RWPE1 (cell line): ENCODE measurements at regions of chr1 and their contacts with region 1.

Region 1: DNA sequence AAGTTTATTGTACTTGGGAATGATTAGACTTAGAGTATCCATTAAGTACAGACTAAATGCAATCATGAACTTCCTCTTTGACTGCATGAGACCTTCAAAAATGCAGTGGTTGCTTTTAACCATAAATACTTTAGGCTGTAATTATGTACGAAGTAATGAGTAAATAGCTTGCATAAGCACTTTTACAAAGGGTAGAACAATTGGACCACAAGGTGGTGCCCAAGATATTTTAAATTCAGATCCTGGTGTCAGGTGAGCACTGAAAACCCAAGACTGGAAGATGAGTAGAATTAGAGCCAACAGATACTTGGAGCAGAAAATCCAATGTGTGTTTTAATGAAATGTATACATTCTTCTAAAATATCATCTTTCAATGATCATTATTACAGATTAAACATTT is 43.4 kb upstream of the RHOU start:
- DNase-seq: peak; percentile 66
- H3K27ac ChIP-seq: no peak overlapping the region
- CTCF ChIP-seq: peak; percentile 35

Region 2: GRCh38 chr1:228646717-228647522 is 45.0 kb before region 1 on chr1:
- CTCF ChIA-PET with region 1: no interaction called
- POLR2A ChIA-PET with region 1: no interaction called
- DNase-seq: peak; percentile 26
- H3K27ac ChIP-seq: peak overlapping the region; percentile 94
- CTCF ChIP-seq: no peak

Region 3: DNA sequence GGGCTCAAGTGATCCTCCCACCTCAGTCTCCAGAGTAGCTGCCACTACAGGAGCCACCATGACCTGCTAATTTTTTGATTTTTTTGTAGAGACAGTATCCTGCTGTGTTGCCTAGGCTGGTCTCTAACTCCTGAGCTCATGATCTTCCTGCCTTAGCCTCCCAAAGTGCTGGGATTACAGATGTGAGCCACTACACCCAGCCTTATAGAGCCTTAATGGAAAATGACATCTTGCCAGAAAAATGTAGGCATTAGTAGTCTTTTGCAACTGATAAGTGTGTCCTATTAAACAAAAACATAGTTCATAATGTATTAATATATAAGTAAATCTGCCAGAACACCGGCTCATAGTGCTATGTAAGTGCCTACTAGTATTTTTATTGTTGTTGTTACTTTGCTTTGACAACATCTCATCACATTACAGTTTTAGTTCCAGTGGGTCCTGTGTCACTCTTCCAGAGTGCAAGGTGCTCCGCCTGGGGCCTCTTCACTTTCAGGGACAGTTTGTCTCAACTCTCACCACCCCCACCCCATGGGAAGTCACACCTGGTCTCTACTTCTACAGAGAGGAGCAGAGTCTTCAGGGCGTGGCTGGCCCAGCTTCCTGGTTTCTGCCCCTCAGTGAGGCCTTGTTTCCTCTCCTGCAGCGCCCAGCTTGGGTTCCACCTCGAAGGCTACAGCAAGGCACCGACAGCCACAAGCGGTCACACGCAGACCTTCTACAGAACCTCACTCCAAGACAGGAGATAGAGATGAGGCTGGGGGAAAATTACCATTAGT is 73.4 kb after region 1 on chr1:
- CTCF ChIA-PET with region 1: no interaction called
- POLR2A ChIA-PET with region 1: no interaction called
- DNase-seq: no peak
- H3K27ac ChIP-seq: no peak overlapping the region
- CTCF ChIP-seq: no peak

Region 4: GRCh38 chr1:228921481-228921880 is 229.6 kb after region 1 on chr1:
- CTCF ChIA-PET with region 1: no interaction called
- POLR2A ChIA-PET with region 1: no interaction called
- DNase-seq: no peak
- H3K27ac ChIP-seq: no peak overlapping the region
- CTCF ChIP-seq: no peak

Region 5: DNA sequence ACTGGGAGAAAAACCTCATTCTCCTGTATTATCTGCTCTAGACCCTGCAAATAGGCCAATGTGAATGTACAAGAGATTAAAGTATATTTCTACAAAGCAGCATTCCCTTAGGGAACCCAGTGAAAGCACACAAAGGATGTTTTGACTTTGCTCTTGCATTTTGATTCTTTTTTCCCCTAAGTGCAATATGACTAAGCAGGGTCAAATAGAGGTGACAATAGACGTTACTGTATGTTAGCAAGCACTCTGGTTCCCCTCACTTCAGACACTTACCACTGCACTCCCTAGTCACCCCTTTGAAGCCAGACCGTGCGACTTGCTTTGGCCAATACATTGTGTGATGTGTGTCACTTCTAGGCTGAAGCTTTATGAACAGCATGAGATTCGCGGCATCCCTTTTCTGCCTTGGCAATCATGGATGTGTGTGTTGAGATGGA is 253.0 kb after region 1 on chr1:
- CTCF ChIA-PET with region 1: no interaction called
- POLR2A ChIA-PET with region 1: no interaction called
- DNase-seq: no peak
- H3K27ac ChIP-seq: no peak overlapping the region
- CTCF ChIP-seq: no peak

Region 6: GRCh38 chr1:229156872-229157271 is 464.9 kb after region 1 on chr1:
- CTCF ChIA-PET with region 1: interaction called, 10 read pairs
- POLR2A ChIA-PET with region 1: no interaction called
- DNase-seq: peak; percentile 38
- H3K27ac ChIP-seq: no peak overlapping the region
- CTCF ChIP-seq: no peak